Right cardiac atrium (tissue), 5 donors: ENCODE measurements at regions of chr16 and their contacts with region 1.

Region 1: GRCh38 chr16:11819798-11820197 is 22.7 kb upstream of the ZC3H7A start:
- DNase-seq: no peak
- ATAC-seq: no peak
- H3K4me3 ChIP-seq: no peak overlapping the region
- H3K27ac ChIP-seq: no peak overlapping the region
- H3K4me1 ChIP-seq: no peaks in the 10 kb centered on the region
- H3K27me3 ChIP-seq: no peaks in the 10 kb centered on the region

Region 2: GRCh38 chr16:11407047-11407982 is 412.5 kb before region 1 on chr16:
- intact Hi-C with region 1: loop called in 1 of 4 experiments (anchors 10 kb)
- DNase-seq: peak in 1 of 3 donors; percentile 69
- ATAC-seq: peak in 1 of 2 donors; percentile 49
- H3K4me3 ChIP-seq: no peak overlapping the region
- H3K27ac ChIP-seq: no peak overlapping the region
- H3K4me1 ChIP-seq: no peaks in the 10 kb centered on the region
- H3K27me3 ChIP-seq: no peaks in the 10 kb centered on the region

Region 3: DNA sequence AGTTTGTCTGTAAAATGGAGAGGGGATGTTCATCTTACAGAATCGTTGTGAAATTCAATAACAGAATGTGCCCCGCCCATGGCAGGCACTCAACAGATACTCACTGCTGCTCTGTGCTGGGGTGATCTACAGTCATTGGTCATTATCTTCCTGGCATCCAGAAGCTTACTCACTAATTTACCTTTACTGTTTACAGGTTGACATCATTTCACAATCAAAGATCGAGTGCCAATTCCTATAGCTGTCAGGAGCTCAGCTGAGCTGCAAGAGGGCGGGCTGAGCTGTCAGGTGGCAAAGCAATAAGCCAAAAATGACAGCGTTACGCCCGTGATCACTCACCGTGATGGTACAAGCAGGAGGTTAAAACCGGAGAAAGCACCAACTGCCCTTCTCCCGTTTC is 284.3 kb before region 1 on chr16:
- intact Hi-C with region 1: loop called in 1 of 4 experiments (anchors 10 kb)
- DNase-seq: no peak
- ATAC-seq: no peak
- H3K4me3 ChIP-seq: no peak overlapping the region
- H3K27ac ChIP-seq: no peak overlapping the region
- H3K4me1 ChIP-seq: no peaks in the 10 kb centered on the region
- H3K27me3 ChIP-seq: no peaks in the 10 kb centered on the region

Region 4: DNA sequence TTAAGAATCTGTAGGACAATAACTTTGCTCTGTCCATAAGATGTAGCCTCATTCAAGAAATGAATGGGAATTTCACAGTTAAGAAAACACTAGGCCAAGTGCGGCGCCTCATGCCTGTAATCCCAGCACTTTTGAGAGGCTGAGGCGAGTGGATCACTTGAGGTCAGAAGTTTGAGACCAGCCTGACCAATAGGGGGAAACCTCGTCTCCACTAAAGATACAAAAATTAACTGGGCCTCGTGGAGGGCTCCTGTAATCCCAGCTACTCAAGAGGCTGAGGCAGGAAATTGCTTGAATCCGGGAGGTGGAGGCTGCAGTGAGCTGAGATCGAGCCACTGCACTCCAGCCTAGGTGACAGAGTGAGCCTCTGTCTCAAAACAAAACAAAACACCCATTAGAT is 51.4 kb after region 1 on chr16:
- intact Hi-C with region 1: no loop called
- DNase-seq: no peak
- ATAC-seq: peak; percentile 39 to 45
- H3K4me3 ChIP-seq: no peak overlapping the region
- H3K27ac ChIP-seq: no peak overlapping the region
- H3K4me1 ChIP-seq: no peaks in the 10 kb centered on the region
- H3K27me3 ChIP-seq: no peaks in the 10 kb centered on the region